GM13977 (cell line): ENCODE measurements at regions of chr1 and their contacts with region 1.

Region 1: GRCh38 chr1:1779706-1780597 is 1.7 kb upstream of the NADK start:
- DNase-seq: peak; percentile 82
- CTCF ChIP-seq: no peak

Region 2: DNA sequence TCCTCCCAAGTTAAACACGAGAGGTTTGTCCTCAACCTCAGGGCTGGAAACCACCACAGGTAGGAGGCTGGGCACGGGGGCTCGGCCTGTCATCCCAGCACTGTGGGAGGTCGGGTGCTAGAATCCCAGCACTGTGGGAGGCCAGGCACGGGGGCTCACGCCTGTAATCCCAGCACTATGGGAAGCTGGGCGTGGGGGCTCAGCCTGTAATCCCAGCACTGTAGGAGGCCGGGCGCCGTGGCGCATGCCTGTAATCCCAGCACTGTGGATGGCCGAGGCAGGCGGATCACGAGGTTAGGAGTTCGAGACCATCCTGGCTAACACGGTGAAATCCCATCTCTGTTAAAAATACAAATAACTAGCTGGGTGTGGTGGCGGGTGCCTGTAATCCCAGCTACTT is 49.1 kb before region 1 on chr1:
- in situ Hi-C with region 1: no loop called
- DNase-seq: no peak
- CTCF ChIP-seq: no peak

Region 3: DNA sequence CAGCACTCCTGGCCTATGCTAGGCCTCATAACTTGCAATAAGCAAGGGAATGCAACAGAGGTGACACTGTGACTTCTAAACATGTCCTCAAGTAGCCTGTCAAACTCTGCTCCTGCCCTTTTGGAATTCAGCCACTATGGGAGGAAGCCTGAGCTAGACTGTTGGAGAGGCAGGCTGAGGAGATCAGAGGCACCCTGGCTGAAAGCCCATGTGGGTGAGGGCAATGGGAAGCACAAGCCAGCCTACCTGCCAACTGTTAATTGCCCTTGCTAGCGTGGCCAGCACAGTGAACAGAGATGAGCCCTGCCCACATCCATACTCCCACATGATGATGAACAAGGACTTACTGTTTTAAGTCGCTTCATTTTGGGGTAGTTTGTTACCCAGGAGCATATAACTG is 93.2 kb after region 1 on chr1:
- in situ Hi-C with region 1: no loop called
- DNase-seq: no peak
- CTCF ChIP-seq: no peak

Region 4: DNA sequence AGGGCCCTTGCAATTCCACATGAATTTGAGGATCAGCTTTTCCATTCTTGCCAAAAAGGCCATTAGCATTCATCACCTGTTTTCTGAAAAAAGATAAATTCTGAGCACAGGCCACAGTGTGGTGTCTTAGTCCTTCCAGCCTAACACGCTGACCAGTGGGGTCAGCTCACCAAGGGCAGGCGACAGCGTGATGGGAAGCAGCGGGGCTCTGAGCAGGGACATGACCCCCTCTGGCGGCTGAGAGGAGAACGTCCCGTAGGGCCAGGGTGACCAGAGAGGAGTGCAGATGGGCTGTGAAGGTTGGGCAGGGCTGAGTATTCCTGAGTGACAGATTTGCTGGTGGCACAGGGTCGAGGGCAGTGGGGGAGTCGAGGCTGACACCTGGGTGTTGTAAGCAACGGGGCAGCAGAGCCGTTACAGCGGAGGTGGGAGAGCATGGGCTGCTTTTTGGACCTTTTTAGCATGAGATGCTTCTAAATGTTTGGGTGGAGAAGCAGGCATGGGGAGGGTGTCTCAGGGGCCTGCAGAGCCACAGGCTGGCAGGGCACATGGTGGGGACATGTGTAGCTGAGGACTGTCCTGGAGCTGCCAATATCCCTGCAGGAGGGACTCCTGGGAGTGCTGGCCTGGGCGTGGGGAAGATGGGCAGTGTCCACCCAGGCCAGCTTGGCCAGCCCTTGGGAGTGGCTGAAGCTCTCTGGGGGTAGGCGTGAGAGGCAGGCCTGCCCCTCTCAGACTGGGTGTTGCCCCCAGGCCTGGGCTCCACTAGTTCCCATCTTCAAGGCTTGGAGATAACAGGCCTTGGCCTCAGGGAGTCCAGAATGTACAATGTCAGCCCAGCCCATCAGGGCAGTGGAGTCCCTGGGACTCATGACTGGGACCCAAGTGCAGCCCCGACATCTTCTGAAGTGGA is 126.5 kb after region 1 on chr1:
- in situ Hi-C with region 1: loop called (anchors 10 kb)
- DNase-seq: peak; percentile 82
- CTCF ChIP-seq: peak; percentile 95